GM10248 (cell line): ENCODE measurements at regions of chr20 and their contacts with region 1.

Region 1: GRCh38 chr20:56554869-56555268 is 21.8 kb downstream of the FAM209B start:
- DNase-seq: peak; percentile 56
- CTCF ChIP-seq: no peak

Region 2: DNA sequence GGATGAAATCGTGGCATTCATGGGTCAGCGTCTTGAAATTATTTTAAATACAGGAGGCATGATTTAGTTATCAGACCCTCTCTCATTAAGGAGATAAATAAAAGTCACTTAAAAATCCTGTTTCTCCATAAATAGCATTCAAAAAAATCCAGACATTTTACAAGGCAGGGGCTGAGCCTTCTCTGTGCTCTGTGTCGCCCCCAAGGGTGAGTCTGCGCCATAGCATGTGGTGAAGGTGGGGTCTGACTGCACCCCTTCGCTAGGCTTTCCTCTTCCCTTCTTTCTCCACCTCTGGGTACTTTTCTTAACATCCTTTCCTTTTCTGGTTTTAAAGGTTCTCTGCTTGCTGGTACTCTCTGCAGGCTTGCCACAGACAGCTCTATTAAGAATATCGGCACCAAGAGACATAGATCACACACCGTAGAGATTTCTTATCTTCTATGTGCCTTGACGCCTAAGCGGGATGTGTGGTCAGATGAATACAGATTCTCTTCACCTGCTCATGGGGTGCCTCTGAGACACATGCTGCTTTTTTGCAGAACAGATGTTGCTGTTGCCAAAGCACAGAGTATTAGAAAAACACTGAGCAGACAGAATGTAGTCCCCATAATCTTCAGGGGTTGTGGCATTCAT is 50.4 kb before region 1 on chr20:
- CTCF ChIA-PET with region 1: no interaction called
- POLR2A ChIA-PET with region 1: no interaction called
- DNase-seq: peak; percentile 30
- CTCF ChIP-seq: peak; percentile 23

Region 3: GRCh38 chr20:56566271-56566981 is 11.6 kb after region 1 on chr20:
- CTCF ChIA-PET with region 1: interaction called, 14 read pairs
- POLR2A ChIA-PET with region 1: no interaction called
- DNase-seq: no peak
- CTCF ChIP-seq: no peak

Region 4: GRCh38 chr20:56974499-56975236 is 419.8 kb after region 1 on chr20:
- CTCF ChIA-PET with region 1: interaction called, 10 read pairs
- POLR2A ChIA-PET with region 1: no interaction called
- DNase-seq: peak; percentile 40
- CTCF ChIP-seq: peak; percentile 45

Region 5: DNA sequence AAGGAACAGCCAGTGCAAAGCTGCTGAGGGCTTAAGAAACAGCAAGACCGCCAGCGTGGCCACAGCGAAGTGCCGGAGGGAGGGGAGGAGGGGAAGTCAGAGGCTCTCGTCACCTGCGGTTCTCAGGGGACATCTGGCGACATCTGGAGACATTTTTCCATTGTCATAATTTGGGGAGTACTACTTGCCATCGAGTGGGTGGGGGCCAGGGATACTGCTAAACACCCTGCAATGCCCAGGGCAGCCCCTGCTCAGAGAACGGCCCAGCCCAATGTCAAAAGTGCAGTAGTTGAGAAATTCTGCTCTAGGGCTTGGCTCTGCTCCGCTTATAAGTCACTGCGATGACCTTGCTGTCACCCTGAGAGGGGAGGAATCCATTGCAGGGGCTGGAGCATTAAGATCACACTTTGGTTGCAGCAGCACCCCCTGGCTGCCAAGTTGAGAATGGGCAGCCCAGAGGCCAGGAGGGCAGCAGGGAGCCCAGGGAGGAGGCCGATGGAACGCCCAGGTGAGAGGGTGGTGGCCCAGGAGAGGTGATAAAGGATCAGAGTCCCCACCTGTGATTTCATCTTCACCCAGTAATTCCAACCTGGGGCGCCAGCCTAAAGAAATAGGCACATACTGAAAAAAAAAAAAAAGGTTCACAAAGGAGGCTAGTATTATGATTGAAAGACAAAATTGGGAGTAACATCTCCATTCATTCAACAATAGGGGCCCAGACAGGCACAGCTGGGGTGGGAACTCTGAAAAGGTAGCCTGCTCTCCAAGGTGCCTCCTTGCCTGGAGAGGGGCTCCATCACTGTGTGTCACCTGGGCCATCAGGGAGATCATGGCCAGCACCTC is 493.4 kb after region 1 on chr20:
- CTCF ChIA-PET with region 1: interaction called, 14 read pairs
- POLR2A ChIA-PET with region 1: no interaction called
- DNase-seq: peak; percentile 66
- CTCF ChIP-seq: peak; percentile 70